ENCODE measurements at regions of chr11 and their contacts with region 1.

Region 1: GRCh38 chr11:48210052-48210451 is 6.6 kb upstream of the OR4B1 start:
- DNase-seq: peak in 1 of 2 experiments; percentile 3
- H3K4me3 ChIP-seq: no peak overlapping the region
- H3K27ac ChIP-seq: no peak overlapping the region
- H3K4me1 ChIP-seq: no peaks in the 10 kb centered on the region
- H3K27me3 ChIP-seq: peaks cover 41% of the 10 kb centered on the region
- CTCF ChIP-seq: peak; percentile 56

Region 2: GRCh38 chr11:48116437-48117228 is 93.4 kb before region 1 on chr11:
- CTCF ChIA-PET with region 1: no interaction called
- POLR2A ChIA-PET with region 1: no interaction called
- intact Hi-C with region 1: no loop called
- DNase-seq: no peak
- H3K4me3 ChIP-seq: no peak overlapping the region
- H3K27ac ChIP-seq: no peak overlapping the region
- H3K4me1 ChIP-seq: no peaks in the 10 kb centered on the region
- H3K27me3 ChIP-seq: no peaks in the 10 kb centered on the region
- CTCF ChIP-seq: peak; percentile 65

Region 3: GRCh38 chr11:48228761-48229160 is 18.7 kb after region 1 on chr11:
- CTCF ChIA-PET with region 1: no interaction called
- POLR2A ChIA-PET with region 1: interaction called, 16 read pairs
- intact Hi-C with region 1: no loop called
- DNase-seq: no peak
- H3K4me3 ChIP-seq: no peak overlapping the region
- H3K27ac ChIP-seq: no peak overlapping the region
- H3K4me1 ChIP-seq: no peaks in the 10 kb centered on the region
- H3K27me3 ChIP-seq: peaks cover 44% of the 10 kb centered on the region
- CTCF ChIP-seq: no peak